ENCODE measurements at regions of chr17 and their contacts with region 1.

Region 1: GRCh38 chr17:6473128-6473767 is 29.0 kb downstream of the PIMREG start:
- DNase-seq: peak; percentile 81 to 98
- ATAC-seq: peak; percentile 78 to 93
- H3K4me3 ChIP-seq: no peak overlapping the region
- H3K27ac ChIP-seq: peak overlapping the region; percentile 53 to 76; a peak in 5 of 6 replicates
- H3K4me1 ChIP-seq: peaks cover 24% of the 10 kb centered on the region
- CTCF ChIP-seq: peak; percentile 95
- EP300 ChIP-seq: no peak
- POLR2A ChIP-seq: no peak
- RAD21 ChIP-seq: peak; percentile 93

Region 2: GRCh38 chr17:6334395-6334794 is 138.9 kb before region 1 on chr17:
- CTCF ChIA-PET with region 1: no interaction called
- POLR2A ChIA-PET with region 1: no interaction called
- DNase-seq: no peak
- ATAC-seq: no peak
- H3K4me3 ChIP-seq: no peak overlapping the region
- H3K27ac ChIP-seq: no peak overlapping the region
- H3K4me1 ChIP-seq: no peaks in the 10 kb centered on the region
- CTCF ChIP-seq: no peak
- EP300 ChIP-seq: no peak
- POLR2A ChIP-seq: no peak
- RAD21 ChIP-seq: no peak

Region 3: GRCh38 chr17:6454957-6455705 is 18.1 kb before region 1 on chr17:
- CTCF ChIA-PET with region 1: interaction called, 77 read pairs
- POLR2A ChIA-PET with region 1: no interaction called
- DNase-seq: no peak
- ATAC-seq: no peak
- H3K4me3 ChIP-seq: no peak overlapping the region
- H3K27ac ChIP-seq: no peak overlapping the region
- H3K4me1 ChIP-seq: peaks cover 18% of the 10 kb centered on the region
- CTCF ChIP-seq: no peak
- EP300 ChIP-seq: no peak
- POLR2A ChIP-seq: no peak
- RAD21 ChIP-seq: no peak

Region 4: GRCh38 chr17:6507535-6507934 is 34.3 kb after region 1 on chr17:
- CTCF ChIA-PET with region 1: interaction called, 46 read pairs
- POLR2A ChIA-PET with region 1: no interaction called
- DNase-seq: peak; percentile 71 to 92
- ATAC-seq: peak; percentile 86 to 89
- H3K4me3 ChIP-seq: no peak overlapping the region
- H3K27ac ChIP-seq: peak overlapping the region; percentile 68 to 83
- H3K4me1 ChIP-seq: peaks cover 54% of the 10 kb centered on the region
- CTCF ChIP-seq: no peak
- EP300 ChIP-seq: no peak
- POLR2A ChIP-seq: no peak
- RAD21 ChIP-seq: no peak

Region 5: DNA sequence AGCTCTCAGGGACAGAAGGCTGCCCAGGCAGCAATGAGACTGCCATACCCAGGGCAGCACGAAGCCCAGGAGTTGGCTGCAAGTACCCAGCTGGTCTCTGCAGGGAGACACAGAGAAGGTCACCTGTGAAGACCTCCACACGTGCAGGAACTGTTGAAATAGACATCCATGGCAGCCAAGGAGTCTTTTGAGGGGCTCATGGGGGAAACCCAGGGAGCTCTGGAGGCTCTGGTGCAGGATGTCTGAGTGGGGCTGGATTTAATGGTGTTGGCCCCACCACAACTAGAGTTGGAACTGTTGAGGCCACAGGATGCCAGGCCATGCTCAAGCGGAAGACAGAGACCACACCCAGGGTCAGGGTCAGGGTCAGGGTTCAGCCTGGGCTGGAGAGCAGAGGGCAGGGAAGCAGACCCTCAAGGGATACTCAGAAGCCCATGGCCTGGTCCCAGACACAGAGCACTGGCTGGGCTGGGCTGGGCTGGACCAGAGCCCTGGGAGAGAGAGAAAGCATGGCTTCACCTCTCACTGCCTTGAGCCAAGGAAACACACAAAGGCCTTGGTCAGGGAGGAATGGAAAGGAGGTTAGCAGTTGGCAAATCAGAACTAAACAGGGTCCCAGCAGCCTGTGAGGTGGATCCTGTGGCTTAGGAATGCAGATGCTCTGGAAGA is 61.7 kb after region 1 on chr17:
- CTCF ChIA-PET with region 1: interaction called, 65 read pairs
- POLR2A ChIA-PET with region 1: no interaction called
- DNase-seq: no peak
- ATAC-seq: peak in 1 of 2 experiments; percentile 33; a peak in 1 of 6 replicates
- H3K4me3 ChIP-seq: no peak overlapping the region
- H3K27ac ChIP-seq: no peak overlapping the region
- H3K4me1 ChIP-seq: no peaks in the 10 kb centered on the region
- CTCF ChIP-seq: no peak
- EP300 ChIP-seq: no peak
- POLR2A ChIP-seq: no peak
- RAD21 ChIP-seq: no peak

Region 6: DNA sequence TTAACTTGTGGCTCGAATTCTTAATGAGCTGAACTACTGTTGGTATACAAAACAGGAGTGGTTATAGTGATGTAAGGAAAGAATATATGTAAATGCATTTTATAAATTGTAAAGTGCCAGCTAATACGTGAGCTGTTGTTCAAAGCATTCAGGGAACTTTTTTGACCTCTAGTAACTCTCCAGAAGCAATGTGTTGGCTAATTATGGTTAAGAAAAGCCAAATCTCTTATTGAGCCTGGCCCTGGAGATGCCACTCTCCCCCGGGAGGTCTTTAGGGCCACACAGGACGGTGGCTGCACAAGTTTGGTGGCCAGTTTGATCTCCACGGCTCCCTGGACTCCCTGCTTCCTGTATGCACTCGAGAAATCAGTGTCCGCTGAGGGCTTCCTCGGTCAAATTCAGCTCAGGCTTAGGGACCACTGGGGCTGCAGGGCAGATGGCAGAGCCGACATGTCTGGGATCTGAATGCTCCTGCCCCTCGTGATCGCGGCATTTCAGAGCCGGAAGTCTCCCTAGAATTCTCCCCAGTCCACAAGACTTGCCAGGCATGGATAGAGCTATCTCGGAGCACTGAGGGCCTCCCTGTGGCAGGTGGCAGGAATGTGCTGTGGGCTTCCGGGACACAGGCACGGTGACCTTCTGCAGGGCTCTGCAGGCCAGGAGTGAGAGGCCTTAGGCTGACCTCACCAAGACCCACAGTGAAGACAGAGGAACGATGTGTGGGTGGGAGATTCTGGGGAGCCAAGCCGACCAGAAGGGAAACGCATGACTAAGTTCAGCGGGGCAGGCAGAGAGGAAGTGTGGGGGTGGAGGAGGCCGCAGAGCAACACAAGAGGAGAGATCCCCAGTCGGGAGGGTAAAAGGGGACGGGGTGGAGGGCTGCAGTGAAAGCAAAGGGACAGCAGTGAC is 101.7 kb after region 1 on chr17:
- CTCF ChIA-PET with region 1: interaction called, 46 read pairs
- POLR2A ChIA-PET with region 1: no interaction called
- DNase-seq: no peak
- ATAC-seq: peak in 1 of 2 experiments; percentile 28; a peak in 1 of 6 replicates
- H3K4me3 ChIP-seq: no peak overlapping the region
- H3K27ac ChIP-seq: no peak overlapping the region
- H3K4me1 ChIP-seq: no peaks in the 10 kb centered on the region
- CTCF ChIP-seq: no peak
- EP300 ChIP-seq: no peak
- POLR2A ChIP-seq: no peak
- RAD21 ChIP-seq: no peak

Region 7: DNA sequence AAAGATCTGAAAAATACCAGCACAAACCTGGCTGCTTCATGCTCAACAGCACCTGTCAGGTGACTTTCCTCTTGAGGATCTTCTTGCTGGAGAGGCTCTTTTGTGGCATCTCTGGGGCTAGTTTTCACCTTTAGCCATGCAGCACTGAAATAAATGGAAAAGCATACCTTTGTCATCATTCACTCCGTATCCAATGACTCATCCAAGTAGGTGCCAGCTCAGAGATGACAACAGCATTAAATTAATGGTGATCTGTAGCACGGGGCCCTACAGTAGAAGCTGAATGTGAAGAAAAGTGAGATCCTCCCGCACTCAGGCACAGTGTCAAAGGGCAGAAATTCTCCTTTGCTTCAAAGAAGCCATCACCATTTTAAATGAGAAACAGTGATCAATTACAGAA is 135.1 kb after region 1 on chr17:
- CTCF ChIA-PET with region 1: interaction called, 40 read pairs
- POLR2A ChIA-PET with region 1: interaction called, 3 read pairs
- DNase-seq: peak; percentile 16 to 51
- ATAC-seq: peak; percentile 43 to 56; a peak in 3 of 6 replicates
- H3K4me3 ChIP-seq: no peak overlapping the region
- H3K27ac ChIP-seq: no peak overlapping the region
- H3K4me1 ChIP-seq: peaks cover 19% of the 10 kb centered on the region
- CTCF ChIP-seq: no peak
- EP300 ChIP-seq: no peak
- POLR2A ChIP-seq: no peak
- RAD21 ChIP-seq: no peak

Region 8: GRCh38 chr17:6651357-6651918 is 178.2 kb after region 1 on chr17 and contains the starts of genes C17orf100 and MED31:
- CTCF ChIA-PET with region 1: interaction called, 42 read pairs
- POLR2A ChIA-PET with region 1: no interaction called
- DNase-seq: peak; percentile 95 to 99
- ATAC-seq: peak; percentile 92 to 97
- H3K4me3 ChIP-seq: peak within 1 kb of the TSS; percentile 87
- H3K27ac ChIP-seq: peak within 1 kb of the TSS; percentile 82 to 88
- H3K4me1 ChIP-seq: peaks cover 23% of the 10 kb centered on the region; the same call in 2 of the 3 replicates
- CTCF ChIP-seq: no peak
- EP300 ChIP-seq: no peak
- POLR2A ChIP-seq: peak; percentile 69
- RAD21 ChIP-seq: no peak
- polyA plus RNA-seq, gene C17orf100: 4.1 and 4.2 TPM in 2 replicates
- polyA plus RNA-seq, gene MED31: 49.0 and 50.2 TPM in 2 replicates

Measured in A549 (cell line).